HEK293 (cell line): ENCODE measurements at regions of chr7 and their contacts with region 1.

Region 1: GRCh38 chr7:42940985-42941847 is 9.0 kb downstream of the MRPL32 start:
- H3K4me3 ChIP-seq: no peak overlapping the region
- H3K27ac ChIP-seq: no peak overlapping the region
- H3K4me1 ChIP-seq: no peaks in the 10 kb centered on the region
- CTCF ChIP-seq: peak; percentile 70

Region 2: GRCh38 chr7:43108255-43109011 is 167.2 kb after region 1 on chr7:
- CTCF ChIA-PET with region 1: interaction called, 22 read pairs
- POLR2A ChIA-PET with region 1: no interaction called
- H3K4me3 ChIP-seq: no peak overlapping the region
- H3K27ac ChIP-seq: no peak overlapping the region
- H3K4me1 ChIP-seq: no peaks in the 10 kb centered on the region
- CTCF ChIP-seq: peak; percentile 41; the same call in 1 of the 2 replicates